ENCODE measurements at regions of chr2 and their contacts with region 1.

Region 1: DNA sequence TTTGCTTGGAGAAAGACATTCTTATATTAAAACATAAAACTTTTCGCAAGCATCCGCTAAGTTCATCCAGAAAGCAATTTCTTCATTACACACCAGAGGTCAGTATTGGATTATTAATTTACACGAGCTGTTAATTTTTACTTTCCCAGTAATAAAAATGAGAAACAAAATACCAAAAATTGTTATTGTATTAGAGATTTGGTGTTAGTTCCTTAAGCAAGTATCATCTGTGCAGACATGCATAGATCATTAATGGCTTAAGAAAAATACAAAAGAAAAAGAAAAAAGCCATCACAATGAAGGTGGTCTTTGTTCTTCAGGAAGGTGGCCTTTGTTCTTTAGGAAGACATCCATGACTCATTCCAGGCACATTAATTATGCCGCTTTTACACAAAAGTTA is 53.6 kb upstream of the HNMT start:
- DNase-seq: no peak
- H3K4me3 ChIP-seq: no peak overlapping the region
- H3K27ac ChIP-seq: no peak overlapping the region
- H3K4me1 ChIP-seq: no peaks in the 10 kb centered on the region
- H3K27me3 ChIP-seq: no peaks in the 10 kb centered on the region
- CTCF ChIP-seq: peak in 4 of 6 experiments; percentile 33 to 67 (median 60)
- POLR2A ChIP-seq: no peak

Region 2: DNA sequence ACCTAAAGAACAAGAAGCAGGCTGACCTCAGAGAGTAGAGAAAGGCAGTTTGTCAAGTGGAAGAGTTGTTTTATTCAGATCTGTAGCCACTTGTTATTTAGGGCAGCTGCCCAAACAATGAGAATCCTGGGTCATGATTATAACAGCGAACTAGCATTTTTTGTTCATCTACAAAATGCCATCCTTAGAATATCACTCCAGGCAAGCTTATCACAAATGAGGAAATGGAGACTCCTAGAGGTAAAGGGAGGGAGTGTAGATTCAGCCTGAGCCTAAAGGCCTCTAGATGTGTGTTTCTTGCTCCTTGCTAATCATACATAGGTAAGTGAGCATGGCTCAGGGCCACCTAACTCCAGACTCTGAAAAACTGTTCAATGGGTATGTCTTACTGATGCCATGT is 179.7 kb after region 1 on chr2:
- intact Hi-C with region 1: no loop called
- DNase-seq: no peak
- H3K4me3 ChIP-seq: no peak overlapping the region
- H3K27ac ChIP-seq: no peak overlapping the region
- H3K4me1 ChIP-seq: no peaks in the 10 kb centered on the region
- H3K27me3 ChIP-seq: no peaks in the 10 kb centered on the region
- CTCF ChIP-seq: peak in 4 of 6 experiments; percentile 26 to 53 (median 36)
- POLR2A ChIP-seq: no peak

Region 3: DNA sequence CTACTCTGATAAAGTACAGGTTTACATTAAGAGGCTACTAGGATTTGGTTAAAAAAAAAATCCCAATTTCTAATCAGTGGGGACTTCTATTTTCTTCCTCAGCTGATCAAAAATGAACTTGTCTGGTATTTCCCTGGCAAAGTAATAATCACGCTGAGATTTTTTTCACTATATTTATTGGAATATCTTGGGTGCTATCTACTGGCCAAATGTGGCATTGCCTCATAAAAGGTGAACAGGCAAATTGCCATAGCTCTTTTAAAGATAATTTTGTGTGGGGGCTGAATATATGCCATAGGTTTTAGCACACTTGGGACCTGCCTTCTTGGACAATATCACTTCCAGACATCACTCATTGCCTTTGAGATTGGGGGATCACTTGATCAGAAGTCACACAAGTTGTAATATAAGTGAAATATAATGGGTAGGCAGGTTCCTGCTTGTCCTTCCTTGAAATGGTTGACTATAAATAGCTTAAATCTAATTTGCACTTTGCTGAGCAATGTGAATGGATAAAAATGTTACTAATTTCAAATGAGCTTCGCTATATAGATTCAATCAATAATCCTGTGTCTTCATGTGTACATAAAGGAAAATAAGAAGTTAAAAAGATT is 876.5 kb after region 1 on chr2:
- intact Hi-C with region 1: loop called (anchors 10 kb)
- DNase-seq: no peak
- H3K4me3 ChIP-seq: no peak overlapping the region
- H3K27ac ChIP-seq: no peak overlapping the region
- H3K4me1 ChIP-seq: no peaks in the 10 kb centered on the region
- H3K27me3 ChIP-seq: no peaks in the 10 kb centered on the region
- CTCF ChIP-seq: peak; percentile 27 to 78 (median 62)
- POLR2A ChIP-seq: no peak

Region 4: GRCh38 chr2:138827426-138828054 is 916.9 kb after region 1 on chr2:
- intact Hi-C with region 1: loop called (anchors 5 kb)
- DNase-seq: no peak
- H3K4me3 ChIP-seq: no peak overlapping the region
- H3K27ac ChIP-seq: no peak overlapping the region
- H3K4me1 ChIP-seq: peaks cover 4% of the 10 kb centered on the region in 2 donors
- H3K27me3 ChIP-seq: no peaks in the 10 kb centered on the region
- CTCF ChIP-seq: peak; percentile 34 to 73 (median 62)
- POLR2A ChIP-seq: no peak

Measured in thyroid gland (tissue), 4 donors.